HCT116 (cell line): ENCODE measurements at regions of chr13 and their contacts with region 1.

Region 1: DNA sequence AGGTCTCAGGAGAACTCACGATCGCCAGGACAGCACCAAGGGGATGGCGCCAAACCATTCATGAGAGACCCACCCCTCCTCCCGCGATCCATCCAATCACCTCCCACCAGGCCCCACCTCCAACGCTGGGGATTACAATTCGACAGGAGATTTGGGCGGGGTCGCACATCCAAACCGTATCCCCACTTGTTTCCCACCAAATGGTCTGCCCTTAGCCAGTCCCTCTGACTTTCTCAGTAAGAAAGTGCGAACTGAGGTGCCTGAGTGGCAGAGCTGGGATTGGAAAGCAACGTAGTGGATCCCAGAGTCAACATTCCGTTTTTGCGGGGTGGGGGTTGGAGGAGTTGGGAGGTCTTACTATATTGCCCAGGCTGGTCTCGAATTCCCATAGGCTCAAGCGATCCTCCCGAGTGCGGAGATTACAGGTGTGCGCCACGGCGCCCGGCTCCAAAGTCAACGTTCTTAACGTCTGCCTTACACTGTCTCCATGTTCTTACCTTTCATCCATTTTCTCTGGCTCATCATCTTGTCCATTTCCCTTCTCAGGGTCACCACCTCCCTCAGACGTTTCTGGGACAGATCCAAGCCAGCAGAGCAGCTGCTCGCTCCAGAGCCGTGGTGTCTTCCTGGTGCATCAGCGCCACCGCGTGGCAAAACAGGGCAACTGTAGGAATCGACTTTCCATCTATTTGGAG is 102.7 kb upstream of the ABCC4 start:
- DNase-seq: peak; percentile 61
- ATAC-seq: peak; percentile 92
- H3K4me3 ChIP-seq: no peak overlapping the region
- H3K27ac ChIP-seq: no peak overlapping the region
- H3K4me1 ChIP-seq: peaks cover 0 to 5% of the 10 kb centered on the region in 2 experiments; a peak in 1 of 4 replicates
- H3K27me3 ChIP-seq: no peaks in the 10 kb centered on the region
- CTCF ChIP-seq: peak; percentile 82 to 97 (median 90)
- POLR2A ChIP-seq: no peak
- RAD21 ChIP-seq: peak; percentile 96

Region 2: DNA sequence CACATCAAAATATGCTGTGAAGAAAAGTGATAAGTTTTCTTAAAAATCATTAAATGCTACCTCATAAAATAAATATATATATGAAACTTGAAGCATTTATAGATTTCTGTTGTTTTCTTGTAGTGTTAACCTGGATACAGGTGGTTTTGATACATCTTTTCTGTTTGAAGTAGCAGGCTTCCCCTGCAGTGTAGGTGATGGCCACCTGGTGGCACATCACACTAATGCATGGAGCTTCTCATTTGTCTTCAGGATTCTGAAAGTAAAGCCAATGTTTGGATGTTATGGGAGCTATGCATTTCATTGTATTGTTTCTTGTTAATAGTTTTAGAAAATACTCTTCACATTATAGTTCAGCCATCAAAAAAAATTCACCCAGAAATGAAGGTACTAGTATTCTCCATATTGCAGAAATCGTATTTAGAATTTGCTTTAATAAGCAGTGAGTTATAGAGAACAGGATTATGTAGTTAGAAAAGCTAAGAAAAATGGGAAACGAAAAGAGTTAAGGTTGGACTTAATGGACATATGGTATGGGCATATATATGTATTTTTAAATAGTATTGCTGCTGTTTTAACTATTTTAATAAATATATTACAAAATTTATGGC is 783.6 kb before region 1 on chr13:
- CTCF ChIA-PET with region 1: interaction called, 14 read pairs
- POLR2A ChIA-PET with region 1: no interaction called
- RAD21 ChIA-PET with region 1: no interaction called
- intact Hi-C with region 1: loop called (anchors 1 kb)
- DNase-seq: peak; percentile 15
- ATAC-seq: peak; percentile 84
- H3K4me3 ChIP-seq: no peak overlapping the region
- H3K27ac ChIP-seq: no peak overlapping the region
- H3K4me1 ChIP-seq: no peaks in the 10 kb centered on the region
- H3K27me3 ChIP-seq: no peaks in the 10 kb centered on the region
- CTCF ChIP-seq: peak; percentile 41 to 79 (median 76); a peak in 5 of 6 replicates
- POLR2A ChIP-seq: no peak
- RAD21 ChIP-seq: peak; percentile 51

Region 3: DNA sequence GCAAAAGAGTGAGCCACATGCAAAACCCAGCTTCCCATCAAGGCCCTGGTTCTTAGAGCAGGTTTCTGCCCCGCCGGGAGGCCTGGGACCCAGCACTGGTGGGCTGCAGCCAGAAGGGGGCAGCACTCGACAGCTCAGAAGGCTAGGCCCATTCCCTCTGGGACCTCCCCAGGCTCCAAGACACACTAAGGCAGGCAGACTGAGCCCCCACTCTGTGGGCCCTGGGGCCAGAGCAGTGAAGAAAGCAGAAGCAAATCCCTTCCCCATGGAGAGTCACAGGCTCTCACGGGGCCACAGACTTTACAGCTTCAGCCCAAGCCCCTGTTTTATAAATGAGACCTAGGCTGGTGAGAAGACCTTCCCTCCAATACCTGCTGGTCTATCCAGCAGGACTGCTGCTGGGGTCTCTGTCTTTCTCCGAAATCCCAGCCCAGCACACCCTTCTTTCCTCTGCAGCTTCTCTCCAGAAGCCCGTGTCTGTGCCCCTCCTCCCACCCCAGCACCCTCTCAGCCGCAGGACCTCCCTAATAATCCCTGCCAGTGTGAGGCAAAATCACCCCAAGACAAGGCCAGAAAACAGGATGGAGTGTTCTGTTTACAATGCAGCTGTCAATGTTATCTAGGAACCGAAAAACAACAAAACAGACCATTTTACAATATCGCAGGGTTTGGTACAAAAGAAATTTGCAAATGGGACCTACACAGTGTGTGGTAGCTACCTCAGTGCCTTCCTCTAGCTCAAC is 212.0 kb before region 1 on chr13:
- CTCF ChIA-PET with region 1: interaction called, 218 read pairs
- POLR2A ChIA-PET with region 1: interaction called, 4 read pairs
- RAD21 ChIA-PET with region 1: interaction called, 19 to 21 read pairs
- intact Hi-C with region 1: loop called (anchors 1 kb)
- DNase-seq: peak; percentile 45
- ATAC-seq: peak; percentile 99
- H3K4me3 ChIP-seq: no peak overlapping the region
- H3K27ac ChIP-seq: no peak overlapping the region
- H3K4me1 ChIP-seq: no peaks in the 10 kb centered on the region
- H3K27me3 ChIP-seq: no peaks in the 10 kb centered on the region
- CTCF ChIP-seq: peak; percentile 80 to 97 (median 94)
- POLR2A ChIP-seq: no peak
- RAD21 ChIP-seq: peak; percentile 91

Region 4: DNA sequence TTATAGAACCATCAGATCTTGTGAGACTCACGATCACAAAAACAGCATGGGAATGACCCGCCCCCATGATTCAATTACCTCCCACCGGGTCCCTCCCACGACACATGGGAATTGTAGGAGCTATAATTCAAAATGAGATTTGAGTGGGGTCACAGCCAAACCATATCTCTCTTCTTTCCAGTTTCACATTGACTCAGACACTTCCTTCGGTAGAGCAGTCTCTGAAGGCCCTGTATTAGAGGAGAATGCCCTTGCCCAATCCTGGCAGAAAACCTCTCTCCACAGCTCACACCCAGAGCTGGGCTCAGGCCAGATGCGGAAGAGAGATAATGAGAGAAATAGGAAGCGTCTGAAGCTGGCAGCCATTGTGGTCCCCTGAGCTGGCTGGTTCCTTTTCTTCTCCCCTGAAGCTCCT is 76.2 kb after region 1 on chr13:
- CTCF ChIA-PET with region 1: no interaction called
- POLR2A ChIA-PET with region 1: no interaction called
- RAD21 ChIA-PET with region 1: no interaction called
- intact Hi-C with region 1: loop called (anchors 5 kb)
- DNase-seq: no peak
- ATAC-seq: no peak
- H3K4me3 ChIP-seq: no peak overlapping the region
- H3K27ac ChIP-seq: no peak overlapping the region
- H3K4me1 ChIP-seq: peaks cover 3 to 12% of the 10 kb centered on the region in 2 experiments; a peak in 3 of 4 replicates
- H3K27me3 ChIP-seq: no peaks in the 10 kb centered on the region
- CTCF ChIP-seq: no peak
- POLR2A ChIP-seq: no peak
- RAD21 ChIP-seq: no peak

Region 5: DNA sequence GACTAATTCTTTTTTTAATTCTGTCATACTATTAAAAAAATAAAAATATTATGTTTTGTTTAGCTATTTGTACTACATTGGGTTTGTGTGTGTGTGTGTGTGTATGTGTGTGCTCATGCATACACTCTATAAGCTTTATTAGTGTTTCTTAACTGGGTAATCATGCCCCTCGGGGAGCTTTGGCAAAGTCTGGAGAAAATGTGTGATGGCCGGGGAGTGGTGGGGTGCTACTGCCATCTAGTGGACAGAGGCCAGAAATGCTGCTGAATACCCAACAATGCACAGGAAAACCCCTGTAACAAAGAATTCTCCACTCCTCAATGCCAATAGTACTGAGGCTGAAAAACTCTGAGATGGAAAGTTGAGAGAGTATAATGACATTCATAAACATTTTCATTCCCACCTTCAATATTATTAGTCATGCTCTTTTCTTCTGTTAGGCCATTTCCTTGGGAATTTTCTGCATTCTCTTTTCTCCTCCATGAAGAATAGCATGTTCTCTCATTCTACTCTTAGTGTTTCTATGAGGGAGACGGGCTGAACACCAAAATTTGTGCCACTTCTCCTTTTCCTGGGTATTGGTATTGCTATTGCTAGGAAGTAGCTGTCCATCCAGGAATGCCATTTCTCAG is 430.3 kb after region 1 on chr13:
- CTCF ChIA-PET with region 1: interaction called, 7 read pairs
- POLR2A ChIA-PET with region 1: no interaction called
- RAD21 ChIA-PET with region 1: no interaction called
- intact Hi-C with region 1: loop called (anchors 1 kb)
- DNase-seq: peak; percentile 21
- ATAC-seq: peak; percentile 80
- H3K4me3 ChIP-seq: no peak overlapping the region
- H3K27ac ChIP-seq: no peak overlapping the region
- H3K4me1 ChIP-seq: peaks cover 0 to 6% of the 10 kb centered on the region in 2 experiments; a peak in 2 of 4 replicates
- H3K27me3 ChIP-seq: no peaks in the 10 kb centered on the region
- CTCF ChIP-seq: peak; percentile 72 to 90 (median 89)
- POLR2A ChIP-seq: no peak
- RAD21 ChIP-seq: peak; percentile 89